ENCODE measurements at regions of chr11 and their contacts with region 1.

Region 1: DNA sequence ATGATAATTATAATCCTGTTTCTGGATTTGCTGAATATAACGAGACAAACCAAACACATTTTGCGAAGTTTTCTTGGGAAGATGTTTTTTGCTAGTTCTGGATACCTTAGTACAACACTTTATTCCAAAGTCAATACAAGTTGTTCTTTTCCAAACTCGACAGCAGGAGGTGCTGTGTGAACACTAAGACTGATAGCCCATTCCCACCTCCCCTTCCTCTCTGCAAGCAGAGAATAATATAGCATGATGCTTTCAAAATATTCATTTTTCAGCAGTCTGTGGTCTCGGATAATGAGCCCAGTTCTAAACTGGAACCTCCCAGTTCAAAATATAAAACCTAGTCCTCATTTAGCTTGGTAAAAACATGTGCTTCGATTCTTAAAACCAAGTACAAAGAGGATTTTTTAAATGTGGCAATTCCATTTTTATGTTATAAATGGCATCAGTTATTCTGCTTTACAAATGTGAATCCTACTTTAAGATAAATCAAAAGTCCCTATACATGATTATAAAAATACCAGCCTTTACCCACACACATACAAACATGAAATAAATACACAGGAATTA is 129.1 kb downstream of the DCDC1 start:
- DNase-seq: peak; percentile 18 to 46
- H3K4me3 ChIP-seq: no peak overlapping the region
- H3K27ac ChIP-seq: no peak overlapping the region
- H3K4me1 ChIP-seq: no peaks in the 10 kb centered on the region
- H3K27me3 ChIP-seq: no peaks in the 10 kb centered on the region
- CTCF ChIP-seq: peak; percentile 84

Region 2: DNA sequence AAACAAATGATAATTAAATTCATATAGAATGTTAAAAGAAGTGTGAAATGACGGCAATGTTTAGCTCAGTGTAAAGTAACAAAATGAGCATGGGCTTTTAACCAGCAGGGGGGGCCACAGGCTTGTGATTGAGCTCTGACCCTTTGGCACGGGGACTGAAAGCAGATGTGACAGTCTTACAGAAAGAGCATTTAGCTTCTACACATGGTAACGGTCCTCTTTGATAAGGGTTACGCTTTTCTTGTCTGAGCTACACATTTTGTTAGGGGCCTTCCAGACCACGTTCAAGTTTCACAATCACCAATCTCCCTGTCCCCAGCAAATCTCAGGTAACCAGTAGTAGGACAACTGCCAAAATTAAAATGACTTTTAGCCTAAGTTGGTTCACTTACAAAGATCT is 133.4 kb before region 1 on chr11:
- CTCF ChIA-PET with region 1: no interaction called
- POLR2A ChIA-PET with region 1: no interaction called
- intact Hi-C with region 1: loop called (anchors 2 kb)
- DNase-seq: peak; percentile 42 to 60
- H3K4me3 ChIP-seq: no peak overlapping the region
- H3K27ac ChIP-seq: no peak overlapping the region
- H3K4me1 ChIP-seq: no peaks in the 10 kb centered on the region
- H3K27me3 ChIP-seq: no peaks in the 10 kb centered on the region
- CTCF ChIP-seq: peak; percentile 87

Region 3: DNA sequence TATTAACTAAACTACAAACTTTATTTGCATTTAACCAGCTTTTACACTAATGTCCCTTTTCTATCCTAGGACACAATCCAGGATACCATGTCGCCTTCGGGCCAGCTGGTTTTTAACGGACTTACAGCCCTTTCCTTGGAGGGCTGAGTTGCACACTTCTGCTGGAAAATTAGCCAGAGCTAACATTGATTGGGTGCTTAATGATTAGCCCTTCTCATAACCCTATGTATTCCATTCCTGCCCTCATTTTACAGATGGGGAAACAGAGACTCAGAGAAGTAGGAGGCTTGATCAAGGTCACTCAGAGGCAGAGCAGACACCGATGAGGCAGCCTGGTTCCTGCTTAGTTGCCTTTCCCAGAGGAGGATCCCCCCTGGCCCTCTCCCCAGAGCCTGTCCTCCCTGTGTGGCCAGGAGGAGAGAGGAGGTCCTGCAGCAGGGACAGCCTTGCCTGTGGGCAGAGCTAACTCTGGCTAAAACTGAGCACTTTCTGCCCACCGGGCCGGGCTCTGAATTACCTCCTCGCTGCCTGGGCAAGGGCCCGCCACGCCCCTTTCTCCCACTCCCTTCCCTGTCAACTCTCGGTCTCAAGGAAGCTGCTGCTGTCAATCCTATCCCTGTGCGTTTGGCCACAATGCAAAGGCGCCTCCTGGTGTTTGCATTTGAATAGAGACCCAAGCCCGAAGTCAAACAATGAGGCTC is 630.3 kb after region 1 on chr11:
- CTCF ChIA-PET with region 1: interaction called, 4 read pairs
- POLR2A ChIA-PET with region 1: no interaction called
- intact Hi-C with region 1: loop called (anchors 1 kb)
- DNase-seq: peak; percentile 48 to 50
- H3K4me3 ChIP-seq: no peak overlapping the region
- H3K27ac ChIP-seq: peak overlapping the region; percentile 93
- H3K4me1 ChIP-seq: peaks cover 84% of the 10 kb centered on the region
- H3K27me3 ChIP-seq: no peaks in the 10 kb centered on the region
- CTCF ChIP-seq: peak; percentile 71

Region 4: DNA sequence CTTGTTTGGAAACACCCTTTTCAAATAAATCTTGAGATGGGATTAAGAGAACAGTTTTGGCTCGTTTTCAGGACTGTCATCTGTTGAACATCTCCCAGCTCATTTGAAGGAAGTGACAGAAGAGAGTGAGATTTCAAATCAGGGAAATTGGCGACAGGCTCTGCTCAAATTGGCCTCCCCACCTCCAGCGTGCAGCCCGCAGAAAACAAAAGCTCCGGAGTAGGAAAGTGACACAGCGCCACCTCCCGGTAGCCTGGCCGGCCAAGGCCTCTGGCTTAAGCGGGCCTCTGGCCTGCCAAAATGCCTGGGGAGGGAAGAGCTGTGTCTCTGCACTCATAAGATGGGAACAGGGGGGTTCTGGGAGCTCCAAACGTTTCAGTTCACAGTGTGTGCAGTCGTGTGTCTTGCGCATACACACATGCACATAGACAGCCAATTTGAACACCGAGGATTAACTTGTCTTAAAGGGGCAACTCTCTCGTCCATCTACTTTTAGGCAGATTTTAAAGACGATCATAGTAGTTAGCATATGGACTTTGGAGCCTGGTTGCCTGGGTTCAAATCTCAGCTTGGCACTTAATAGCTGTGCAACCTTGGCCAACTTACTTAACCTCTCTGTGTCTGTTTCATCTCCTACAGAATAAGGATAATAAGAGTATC is 717.8 kb after region 1 on chr11:
- CTCF ChIA-PET with region 1: no interaction called
- POLR2A ChIA-PET with region 1: no interaction called
- intact Hi-C with region 1: loop called (anchors 2 kb)
- DNase-seq: peak; percentile 61 to 70
- H3K4me3 ChIP-seq: no peak overlapping the region
- H3K27ac ChIP-seq: no peak overlapping the region
- H3K4me1 ChIP-seq: peaks cover 16% of the 10 kb centered on the region
- H3K27me3 ChIP-seq: no peaks in the 10 kb centered on the region
- CTCF ChIP-seq: peak; percentile 97

Region 5: GRCh38 chr11:32297611-32298011 is 1057.2 kb after region 1 on chr11:
- CTCF ChIA-PET with region 1: no interaction called
- POLR2A ChIA-PET with region 1: no interaction called
- intact Hi-C with region 1: loop called (anchors 10 kb)
- DNase-seq: peak in 1 of 2 experiments; percentile 45
- H3K4me3 ChIP-seq: no peak overlapping the region
- H3K27ac ChIP-seq: no peak overlapping the region
- H3K4me1 ChIP-seq: no peaks in the 10 kb centered on the region
- H3K27me3 ChIP-seq: no peaks in the 10 kb centered on the region
- CTCF ChIP-seq: peak; percentile 67